Caco-2 (cell line): ENCODE measurements at regions of chr10 and their contacts with region 1.

Region 1: GRCh38 chr10:32346134-32346550 is 816 bp downstream of the EPC1 start:
- DNase-seq: peak; percentile 99
- H3K4me3 ChIP-seq: peak overlapping the region; percentile 80
- H3K4me3 Mint-ChIP-seq: peak overlapping the region; percentile 89
- H3K27ac Mint-ChIP-seq: peak overlapping the region; percentile 100
- H3K4me1 ChIP-seq: peaks cover 42% of the 10 kb centered on the region
- H3K4me1 Mint-ChIP-seq: peaks cover 39% of the 10 kb centered on the region
- H3K27me3 ChIP-seq: no peaks in the 10 kb centered on the region
- H3K27me3 Mint-ChIP-seq: no peaks in the 10 kb centered on the region
- CTCF ChIP-seq: peak; percentile 95 to 99

Region 2: DNA sequence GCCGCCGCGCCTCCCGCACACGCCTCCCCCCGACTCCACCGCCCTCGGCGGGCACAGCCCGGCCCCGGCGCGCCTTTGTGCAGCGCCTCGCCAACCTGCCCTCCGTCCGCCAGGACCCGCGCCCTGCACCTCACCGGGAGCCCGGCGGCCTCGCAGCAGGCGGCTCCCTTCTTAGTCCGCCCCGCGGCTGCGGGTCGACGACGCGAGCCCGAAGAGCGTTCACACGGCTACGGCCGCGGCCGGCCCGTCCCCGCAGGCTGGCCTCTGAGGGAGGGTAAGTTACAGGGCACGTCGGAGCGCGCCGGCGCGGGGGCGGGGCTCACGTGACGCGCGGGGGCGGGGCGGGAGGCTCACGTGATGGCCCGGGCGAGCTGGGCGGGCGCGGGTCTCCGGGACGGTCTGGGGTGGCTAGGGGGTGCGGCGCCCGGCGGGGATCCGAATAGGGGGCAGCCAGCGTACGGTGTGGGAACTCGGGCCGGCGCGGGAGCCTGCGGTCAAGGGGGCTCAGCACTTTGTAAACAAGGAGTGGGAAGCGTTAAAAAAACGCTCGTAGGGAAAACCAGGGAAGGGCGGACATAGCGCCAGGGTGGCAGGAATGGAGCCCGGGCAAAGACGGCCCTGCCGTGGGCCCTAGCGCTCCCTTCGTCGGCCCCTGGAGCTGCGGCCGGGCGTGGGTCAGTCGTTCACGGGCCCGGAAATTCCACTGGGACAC is 417.4 kb before region 1 on chr10 and contains the start of gene ARHGAP12:
- CTCF ChIA-PET with region 1: no interaction called
- POLR2A ChIA-PET with region 1: no interaction called
- intact Hi-C with region 1: loop called (anchors 5 kb)
- DNase-seq: peak; percentile 95 to 99
- H3K4me3 ChIP-seq: peak within 1 kb of the TSS; percentile 80
- H3K4me3 Mint-ChIP-seq: peak within 1 kb of the TSS; percentile 76
- H3K27ac Mint-ChIP-seq: peak within 1 kb of the TSS; percentile 97
- H3K4me1 ChIP-seq: peaks cover 12% of the 10 kb centered on the region; the same call in 1 of the 2 replicates
- H3K4me1 Mint-ChIP-seq: peaks cover 40% of the 10 kb centered on the region
- H3K27me3 ChIP-seq: no peaks in the 10 kb centered on the region
- H3K27me3 Mint-ChIP-seq: no peaks in the 10 kb centered on the region
- CTCF ChIP-seq: no peak
- total RNA-seq, gene ARHGAP12: 62.3 and 63.1 TPM in 2 replicates

Region 3: DNA sequence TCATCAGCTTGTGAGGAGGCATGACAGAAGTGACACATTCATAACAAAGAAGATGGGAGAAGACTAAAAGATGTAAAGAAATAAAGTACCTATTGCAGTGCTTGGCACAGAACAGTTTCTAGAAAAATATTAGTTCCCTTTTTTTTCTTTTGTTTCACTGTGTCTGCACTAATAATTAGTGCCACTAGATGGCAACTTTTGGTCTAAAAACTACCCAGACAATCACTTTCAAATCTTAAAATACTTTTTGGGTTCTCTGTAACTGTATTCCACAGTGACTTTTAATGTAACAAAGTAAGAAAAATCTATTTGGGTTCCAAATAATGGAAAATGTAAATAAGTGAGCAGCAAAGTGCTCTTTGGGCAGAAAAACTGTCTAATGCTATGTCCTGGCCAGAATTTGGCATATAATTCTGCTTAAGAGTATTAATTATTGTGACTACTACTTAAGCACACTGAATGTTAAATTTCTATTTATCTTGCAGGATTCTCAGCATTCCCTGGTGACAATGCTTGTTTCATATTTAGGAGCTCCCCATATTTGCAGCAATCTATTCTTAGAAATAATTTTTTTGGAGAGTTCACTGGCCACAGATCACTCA is 155.2 kb before region 1 on chr10:
- CTCF ChIA-PET with region 1: interaction called, 5 read pairs
- POLR2A ChIA-PET with region 1: no interaction called
- intact Hi-C with region 1: loop called (anchors 1 kb)
- DNase-seq: peak in 1 of 2 experiments; percentile 56
- H3K4me3 ChIP-seq: no peak overlapping the region
- H3K4me3 Mint-ChIP-seq: no peak overlapping the region
- H3K27ac Mint-ChIP-seq: no peak overlapping the region
- H3K4me1 ChIP-seq: peaks cover 24% of the 10 kb centered on the region
- H3K4me1 Mint-ChIP-seq: peaks cover 20% of the 10 kb centered on the region
- H3K27me3 ChIP-seq: no peaks in the 10 kb centered on the region
- H3K27me3 Mint-ChIP-seq: no peaks in the 10 kb centered on the region
- CTCF ChIP-seq: peak; percentile 70 to 75

Region 4: DNA sequence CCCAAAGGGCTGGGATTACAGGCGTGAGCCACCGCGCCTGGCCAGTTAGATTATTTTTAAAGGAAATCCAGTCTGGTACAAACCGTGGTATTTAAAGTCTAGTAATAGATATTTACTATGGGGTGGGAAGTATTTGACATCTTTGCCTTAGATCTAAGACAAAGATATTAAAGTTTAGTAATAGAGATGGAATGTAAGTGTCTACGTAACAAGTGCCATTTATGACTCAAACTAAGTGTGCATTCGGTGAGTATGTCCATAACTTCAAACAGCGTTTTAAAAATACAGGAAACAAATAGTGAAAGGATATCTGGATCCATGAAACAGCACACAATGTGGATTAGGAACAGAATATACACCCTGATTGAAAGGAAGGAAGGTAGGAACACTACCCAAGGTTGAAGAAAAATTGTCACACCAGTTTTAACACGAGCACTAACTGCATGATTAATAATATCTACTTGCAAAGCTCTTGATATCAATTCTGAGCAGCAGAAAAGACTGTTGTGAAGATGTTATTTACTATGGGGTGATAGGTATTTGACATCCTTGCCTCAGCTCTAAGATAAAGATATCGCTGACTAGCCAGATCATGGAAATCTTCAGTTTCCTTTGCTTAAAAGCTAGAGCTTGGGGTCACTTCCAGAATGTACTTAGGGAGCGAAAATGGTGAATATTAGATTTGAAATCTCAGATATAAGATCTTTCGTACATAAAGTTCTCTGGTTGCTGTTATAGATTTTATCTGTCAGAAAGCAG is 47.9 kb before region 1 on chr10:
- CTCF ChIA-PET with region 1: no interaction called
- POLR2A ChIA-PET with region 1: no interaction called
- intact Hi-C with region 1: loop called (anchors 2 kb)
- DNase-seq: no peak
- H3K4me3 ChIP-seq: no peak overlapping the region
- H3K4me3 Mint-ChIP-seq: no peak overlapping the region
- H3K27ac Mint-ChIP-seq: peak overlapping the region; percentile 2
- H3K4me1 ChIP-seq: peaks cover 16% of the 10 kb centered on the region
- H3K4me1 Mint-ChIP-seq: peaks cover 13% of the 10 kb centered on the region
- H3K27me3 ChIP-seq: no peaks in the 10 kb centered on the region
- H3K27me3 Mint-ChIP-seq: no peaks in the 10 kb centered on the region
- CTCF ChIP-seq: no peak

Region 5: GRCh38 chr10:32378363-32379317 is 32.5 kb after region 1 on chr10:
- CTCF ChIA-PET with region 1: interaction called, 3 read pairs
- POLR2A ChIA-PET with region 1: no interaction called
- intact Hi-C with region 1: loop called (anchors 1 kb)
- DNase-seq: peak; percentile 93 to 95
- H3K4me3 ChIP-seq: peak overlapping the region; percentile 70
- H3K4me3 Mint-ChIP-seq: no peak overlapping the region
- H3K27ac Mint-ChIP-seq: no peak overlapping the region
- H3K4me1 ChIP-seq: peaks cover 5% of the 10 kb centered on the region; the same call in 1 of the 2 replicates
- H3K4me1 Mint-ChIP-seq: no peaks in the 10 kb centered on the region
- H3K27me3 ChIP-seq: no peaks in the 10 kb centered on the region
- H3K27me3 Mint-ChIP-seq: no peaks in the 10 kb centered on the region
- CTCF ChIP-seq: no peak